GM10248 (cell line): ENCODE measurements at regions of chr14 and their contacts with region 1.

Region 1: GRCh38 chr14:106831322-106831720 is 1304.9 kb downstream of the TMEM121 start:
- DNase-seq: peak; percentile 54
- CTCF ChIP-seq: peak; percentile 92

Region 2: DNA sequence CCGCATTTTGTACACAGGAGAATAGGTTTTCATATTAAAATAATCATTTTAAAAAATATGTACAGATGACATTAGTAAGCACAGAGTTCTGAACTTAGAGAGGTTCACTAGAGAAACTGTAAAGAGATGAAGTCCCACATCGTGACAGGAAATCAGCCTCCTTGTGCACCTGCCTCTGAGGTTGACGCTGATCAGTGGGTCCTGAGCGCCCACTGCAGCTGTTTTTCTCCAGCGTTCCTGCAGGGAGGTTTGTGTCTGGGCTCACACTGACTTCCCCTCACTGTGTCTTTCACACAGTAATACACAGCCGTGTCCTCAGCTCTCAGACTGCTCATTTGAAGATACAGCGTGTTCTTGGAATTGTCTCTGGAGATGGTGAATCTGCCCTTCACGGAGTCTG is 743.5 kb before region 1 on chr14:
- CTCF ChIA-PET with region 1: no interaction called
- POLR2A ChIA-PET with region 1: no interaction called
- DNase-seq: no peak
- CTCF ChIP-seq: no peak

Region 3: GRCh38 chr14:106538201-106538600 is 293.1 kb before region 1 on chr14:
- CTCF ChIA-PET with region 1: interaction called, 10 read pairs
- POLR2A ChIA-PET with region 1: no interaction called
- DNase-seq: no peak
- CTCF ChIP-seq: no peak

Region 4: GRCh38 chr14:106578481-106578880 is 252.8 kb before region 1 on chr14:
- CTCF ChIA-PET with region 1: no interaction called
- POLR2A ChIA-PET with region 1: no interaction called
- DNase-seq: no peak
- CTCF ChIP-seq: no peak

Region 5: GRCh38 chr14:106622200-106622745 is 209.0 kb before region 1 on chr14:
- CTCF ChIA-PET with region 1: interaction called, 16 read pairs
- POLR2A ChIA-PET with region 1: no interaction called
- DNase-seq: no peak
- CTCF ChIP-seq: no peak

Region 6: GRCh38 chr14:106635554-106635953 is 195.8 kb before region 1 on chr14:
- CTCF ChIA-PET with region 1: no interaction called
- POLR2A ChIA-PET with region 1: no interaction called
- DNase-seq: no peak
- CTCF ChIP-seq: no peak

Region 7: GRCh38 chr14:106738075-106738474 is 93.2 kb before region 1 on chr14:
- CTCF ChIA-PET with region 1: interaction called, 12 read pairs
- POLR2A ChIA-PET with region 1: no interaction called
- DNase-seq: no peak
- CTCF ChIP-seq: no peak

Region 8: DNA sequence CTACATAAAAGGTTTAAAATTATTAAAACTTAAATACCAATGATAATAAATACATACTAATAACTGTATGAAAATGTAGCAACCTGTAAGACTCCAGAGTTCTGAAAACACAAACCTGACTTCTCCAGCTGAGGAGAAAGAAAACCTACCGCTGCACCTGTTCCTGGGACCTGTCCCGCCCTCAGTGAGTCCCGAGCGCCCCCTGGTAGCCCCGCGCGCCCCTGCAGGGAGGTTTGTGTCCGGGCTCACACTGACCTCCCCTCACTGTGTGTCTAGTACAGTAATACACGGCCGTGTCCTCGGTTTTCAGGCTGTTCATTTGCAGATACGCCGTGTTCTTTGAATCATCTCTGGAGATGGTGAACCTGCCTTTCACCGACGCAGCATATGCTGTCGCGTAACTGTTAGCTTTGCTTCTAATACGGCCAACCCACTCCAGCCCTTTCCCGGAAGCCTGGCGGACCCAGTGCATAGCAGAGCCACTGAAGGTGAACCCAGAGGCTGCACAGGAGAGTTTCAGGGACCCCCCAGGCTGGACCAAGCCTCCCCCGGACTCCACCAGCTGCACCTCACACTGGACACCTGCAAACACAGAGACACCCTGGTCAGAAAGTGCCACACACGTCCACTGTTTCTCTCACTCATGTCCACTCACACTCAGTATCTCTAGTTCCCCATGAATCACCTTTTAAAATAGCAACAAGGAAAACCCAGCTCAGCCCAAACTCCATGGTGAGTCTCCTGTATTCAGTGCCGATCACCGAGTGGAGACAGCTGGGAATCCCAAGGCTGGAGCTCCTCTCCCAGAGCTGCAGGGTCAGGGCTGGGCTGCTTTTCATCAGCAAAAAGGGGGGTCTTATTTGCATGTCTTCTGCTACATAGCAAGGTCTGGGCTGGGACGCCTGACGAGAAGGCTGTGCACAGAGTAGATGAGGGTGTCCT is 28.6 kb before region 1 on chr14:
- CTCF ChIA-PET with region 1: interaction called, 64 read pairs
- POLR2A ChIA-PET with region 1: no interaction called
- DNase-seq: peak; percentile 26
- CTCF ChIP-seq: peak; percentile 35

Region 9: DNA sequence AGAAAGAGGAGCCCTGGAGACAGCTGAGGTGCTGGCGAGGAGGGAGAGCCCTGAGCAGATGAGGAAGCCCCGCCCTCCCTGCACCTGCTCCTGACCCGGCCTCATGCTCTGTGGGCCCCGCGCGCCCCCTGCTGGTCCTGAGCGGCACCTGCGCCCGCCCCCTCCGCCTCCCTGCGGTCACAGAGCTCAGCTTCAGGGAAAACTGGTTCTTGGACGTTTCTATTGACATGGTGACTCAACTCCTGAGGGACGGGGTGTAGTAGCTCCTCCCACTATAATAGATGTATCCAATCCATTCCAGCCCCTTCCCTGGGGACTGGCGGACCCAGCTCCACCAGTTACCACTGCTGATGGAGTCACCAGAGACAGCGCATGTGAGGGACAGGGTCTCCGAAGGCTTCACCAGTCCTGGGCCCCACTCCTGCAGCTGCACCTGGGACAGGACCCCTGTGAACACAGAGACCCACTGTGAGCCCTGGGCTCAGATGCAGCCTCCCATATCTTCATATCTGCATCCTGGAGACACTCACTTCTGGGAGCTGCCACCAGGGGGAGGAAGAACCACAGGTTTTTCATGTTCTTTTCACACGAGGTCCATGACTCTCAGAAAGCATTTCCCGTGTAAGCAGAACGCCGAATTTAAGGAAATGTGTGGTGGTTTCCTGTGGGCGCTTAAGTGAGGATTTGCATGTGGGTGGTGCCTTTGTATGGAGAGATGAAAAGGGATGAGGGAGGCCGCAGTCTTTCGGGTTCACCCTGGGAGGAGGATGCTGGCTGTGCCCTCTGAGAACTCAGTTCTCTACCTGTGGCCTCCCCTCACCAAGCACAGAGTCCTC is 41.5 kb after region 1 on chr14:
- CTCF ChIA-PET with region 1: interaction called, 227 read pairs
- POLR2A ChIA-PET with region 1: interaction called, 3 read pairs
- DNase-seq: peak; percentile 66
- CTCF ChIP-seq: peak; percentile 84